WTC11 (cell line): ENCODE measurements at regions of chr11 and their contacts with region 1.

Region 1: DNA sequence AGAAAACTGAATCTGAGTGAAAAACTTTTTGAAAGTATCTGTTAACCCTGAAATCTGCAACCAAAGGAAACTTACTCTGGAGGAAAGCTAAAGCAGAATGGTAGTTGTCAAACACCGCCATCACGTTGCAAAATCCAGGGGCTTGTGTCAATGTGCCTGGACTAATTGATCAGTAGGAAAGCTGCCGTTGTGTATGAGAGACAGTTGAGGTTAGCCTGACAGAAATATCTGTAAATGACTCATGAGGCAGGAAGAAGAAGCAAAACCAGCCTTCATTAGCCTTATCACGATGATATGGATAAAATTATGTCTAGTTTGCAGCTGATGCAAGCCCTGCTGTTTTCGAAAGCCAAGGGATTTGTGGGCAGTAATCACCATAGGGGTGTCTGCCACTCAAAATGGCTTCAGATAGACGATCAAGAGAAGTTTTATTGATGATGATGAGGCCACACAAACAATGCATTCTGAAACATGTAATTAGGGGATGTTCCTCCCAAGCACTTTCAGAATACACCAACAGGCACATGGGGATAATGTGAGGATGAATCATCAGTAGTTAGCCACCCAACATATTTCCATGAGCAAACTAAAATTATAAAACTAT is 8.9 kb downstream of the SCGB1A1 start:
- DNase-seq: no peak
- ATAC-seq: no peak
- H3K4me3 Mint-ChIP-seq: no peak overlapping the region
- H3K27ac Mint-ChIP-seq: peak overlapping the region; percentile 2; the same call in 1 of the 2 replicates
- H3K4me1 Mint-ChIP-seq: peaks cover 8% of the 10 kb centered on the region
- H3K27me3 Mint-ChIP-seq: peaks cover 22% of the 10 kb centered on the region
- CTCF ChIP-seq: no peak

Region 2: GRCh38 chr11:62353844-62354243 is 73.9 kb before region 1 on chr11:
- CTCF ChIA-PET with region 1: no interaction called
- POLR2A ChIA-PET with region 1: no interaction called
- DNase-seq: no peak
- ATAC-seq: no peak
- H3K4me3 Mint-ChIP-seq: no peak overlapping the region
- H3K27ac Mint-ChIP-seq: no peak overlapping the region
- H3K4me1 Mint-ChIP-seq: peaks cover 58% of the 10 kb centered on the region
- H3K27me3 Mint-ChIP-seq: no peaks in the 10 kb centered on the region
- CTCF ChIP-seq: no peak

Region 3: DNA sequence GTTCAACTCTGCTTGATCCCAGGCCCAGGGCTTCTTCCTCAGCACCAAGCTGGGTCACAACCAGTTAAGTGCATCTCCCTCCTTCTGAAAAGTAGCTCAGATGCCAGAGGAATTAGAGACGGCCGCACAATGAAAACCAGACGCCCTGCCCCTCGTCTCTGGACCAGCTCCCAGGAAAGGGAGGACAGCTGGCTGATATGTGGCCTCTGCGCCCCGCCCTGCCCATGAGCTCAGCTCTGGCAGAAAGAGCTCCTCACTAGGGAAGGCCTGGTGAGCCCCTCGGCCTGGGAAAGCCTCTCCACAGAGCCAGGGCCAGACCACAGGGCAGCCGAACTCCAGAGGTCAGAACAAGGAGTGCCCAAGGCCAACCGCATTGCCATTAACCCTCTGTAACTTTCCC is 27.0 kb before region 1 on chr11:
- CTCF ChIA-PET with region 1: interaction called, 138 read pairs
- POLR2A ChIA-PET with region 1: no interaction called
- DNase-seq: no peak
- ATAC-seq: no peak
- H3K4me3 Mint-ChIP-seq: no peak overlapping the region
- H3K27ac Mint-ChIP-seq: no peak overlapping the region
- H3K4me1 Mint-ChIP-seq: peaks cover 24% of the 10 kb centered on the region
- H3K27me3 Mint-ChIP-seq: peaks cover 3% of the 10 kb centered on the region; the same call in 1 of the 2 replicates
- CTCF ChIP-seq: no peak

Region 4: DNA sequence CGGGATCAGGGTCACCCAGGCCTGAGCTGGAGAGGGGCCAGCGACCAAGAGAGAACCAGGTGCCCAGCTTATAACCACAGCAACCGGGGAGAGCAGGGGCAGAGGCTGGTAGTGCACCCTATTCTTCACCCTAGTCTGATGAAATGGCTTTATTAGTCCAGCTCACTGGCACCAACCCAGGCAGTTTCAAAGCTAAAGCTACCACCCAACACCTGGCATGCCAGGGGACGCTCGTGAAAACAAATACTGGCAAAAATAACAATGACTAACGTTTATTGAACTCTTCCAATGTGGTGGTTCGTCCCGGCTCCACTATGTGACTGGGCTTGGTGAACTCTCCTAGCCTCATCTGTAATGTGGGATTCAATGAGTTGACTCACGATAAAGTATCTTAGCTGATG is 21.7 kb after region 1 on chr11:
- CTCF ChIA-PET with region 1: interaction called, 33 read pairs
- POLR2A ChIA-PET with region 1: no interaction called
- DNase-seq: no peak
- ATAC-seq: no peak
- H3K4me3 Mint-ChIP-seq: no peak overlapping the region
- H3K27ac Mint-ChIP-seq: peak overlapping the region; percentile 6; the same call in 1 of the 2 replicates
- H3K4me1 Mint-ChIP-seq: peaks cover 10% of the 10 kb centered on the region
- H3K27me3 Mint-ChIP-seq: no peaks in the 10 kb centered on the region
- CTCF ChIP-seq: no peak

Region 5: DNA sequence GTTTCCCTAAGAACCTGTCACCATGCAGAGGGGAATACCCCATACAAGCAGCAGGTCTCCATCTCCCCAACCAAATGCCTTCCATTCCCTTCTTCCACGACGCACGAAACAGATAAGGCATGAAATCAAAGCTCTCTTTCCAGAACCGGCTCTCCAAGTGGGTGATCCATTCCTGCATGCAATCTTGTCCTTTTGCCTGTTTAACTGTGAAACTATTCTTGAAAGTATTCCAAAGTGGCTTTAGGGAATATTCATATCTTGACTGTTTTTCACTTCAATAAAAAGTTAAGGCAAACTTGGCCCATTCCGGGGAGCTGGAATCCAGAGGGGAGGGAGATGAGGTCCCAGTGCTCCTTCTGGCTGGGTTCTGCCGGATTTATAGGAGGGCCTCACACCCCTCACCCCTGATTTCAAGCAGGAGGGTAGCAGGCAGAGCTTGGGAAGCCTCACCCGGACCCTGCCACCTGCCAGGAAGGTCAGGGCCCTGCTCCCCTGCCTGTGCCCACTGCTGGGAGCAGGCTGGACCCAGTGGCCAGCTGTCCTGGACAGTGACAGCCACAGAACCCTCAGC is 52.0 kb after region 1 on chr11:
- CTCF ChIA-PET with region 1: interaction called, 30 read pairs
- POLR2A ChIA-PET with region 1: no interaction called
- DNase-seq: no peak
- ATAC-seq: no peak
- H3K4me3 Mint-ChIP-seq: no peak overlapping the region
- H3K27ac Mint-ChIP-seq: no peak overlapping the region
- H3K4me1 Mint-ChIP-seq: 0 out of 2 replicates have a peak, but pooled peaks cover 3% of the 10 kb centered on the region
- H3K27me3 Mint-ChIP-seq: no peaks in the 10 kb centered on the region; the same call in 1 of the 2 replicates
- CTCF ChIP-seq: no peak

Region 6: GRCh38 chr11:62542750-62543567 is 115.2 kb after region 1 on chr11:
- CTCF ChIA-PET with region 1: interaction called, 552 read pairs
- POLR2A ChIA-PET with region 1: interaction called, 5 read pairs
- DNase-seq: peak; percentile 90
- ATAC-seq: peak; percentile 51
- H3K4me3 Mint-ChIP-seq: peak overlapping the region; percentile 52
- H3K27ac Mint-ChIP-seq: no peak overlapping the region
- H3K4me1 Mint-ChIP-seq: peaks cover 46% of the 10 kb centered on the region
- H3K27me3 Mint-ChIP-seq: peaks cover 65% of the 10 kb centered on the region
- CTCF ChIP-seq: peak; percentile 99

Region 7: GRCh38 chr11:62591448-62592145 is 163.9 kb after region 1 on chr11 and contains the start of gene TUT1:
- CTCF ChIA-PET with region 1: interaction called, 30 read pairs
- POLR2A ChIA-PET with region 1: interaction called, 5 read pairs
- DNase-seq: peak; percentile 96
- ATAC-seq: peak; percentile 89
- H3K4me3 Mint-ChIP-seq: peak within 1 kb of the TSS; percentile 99
- H3K27ac Mint-ChIP-seq: peak within 1 kb of the TSS; percentile 91
- H3K4me1 Mint-ChIP-seq: peaks cover 19% of the 10 kb centered on the region
- H3K27me3 Mint-ChIP-seq: no peaks in the 10 kb centered on the region; the same call in 1 of the 2 replicates
- CTCF ChIP-seq: no peak
- total RNA-seq, gene TUT1: 35.3 to 40.0 TPM (median 37.3 TPM) in 3 replicates